CD14-positive monocyte (primary cell): ENCODE measurements at regions of chr1 and their contacts with region 1.

Region 1: GRCh38 chr1:198749279-198749678 is 110.4 kb downstream of the PTPRC start:
- DNase-seq: no peak
- H3K4me3 ChIP-seq: no peak overlapping the region
- H3K4me3 Mint-ChIP-seq: no peak overlapping the region
- H3K27ac ChIP-seq: no peak overlapping the region
- H3K27ac Mint-ChIP-seq: no peak overlapping the region
- H3K4me1 ChIP-seq: peaks cover 0 to under 1% of the 10 kb centered on the region in 2 donors
- H3K4me1 Mint-ChIP-seq: peaks cover 5% of the 10 kb centered on the region
- H3K27me3 ChIP-seq: no peaks in the 10 kb centered on the region
- H3K27me3 Mint-ChIP-seq: no peaks in the 10 kb centered on the region
- CTCF ChIP-seq: no peak

Region 2: DNA sequence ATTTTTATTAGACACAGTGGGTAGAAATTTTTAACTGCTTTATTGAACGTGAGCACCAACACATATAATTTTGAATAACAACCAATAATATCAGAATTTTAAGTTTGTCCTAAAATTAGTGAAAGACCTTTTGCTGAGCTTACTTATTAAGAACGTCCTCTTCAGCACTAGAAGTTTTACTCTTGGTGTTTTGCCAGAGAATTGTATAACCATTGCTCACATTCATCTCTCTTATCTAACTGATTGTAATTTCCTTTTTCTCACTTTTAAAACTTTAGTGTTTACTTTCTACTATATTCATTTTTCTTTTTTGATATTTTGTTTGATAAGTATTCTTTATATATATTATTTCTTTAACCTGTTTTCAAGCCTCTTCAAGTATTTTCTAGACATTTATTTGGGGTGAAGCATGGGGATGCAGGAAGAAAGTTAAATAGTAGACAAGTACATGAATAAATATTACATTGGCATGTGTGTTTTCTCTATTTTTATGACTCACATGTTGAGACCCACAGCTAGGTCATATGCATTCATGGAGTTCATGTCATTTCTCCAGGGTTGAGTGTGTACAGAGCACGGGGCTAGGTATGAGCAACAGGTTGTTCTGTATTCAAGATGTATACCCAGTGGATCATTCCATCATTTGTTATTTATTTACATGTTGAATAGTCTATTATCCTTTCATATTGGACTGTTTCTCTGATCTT is 299.4 kb before region 1 on chr1:
- intact Hi-C with region 1: no loop called
- DNase-seq: no peak
- H3K4me3 ChIP-seq: no peak overlapping the region
- H3K4me3 Mint-ChIP-seq: no peak overlapping the region
- H3K27ac ChIP-seq: no peak overlapping the region
- H3K27ac Mint-ChIP-seq: no peak overlapping the region
- H3K4me1 ChIP-seq: no peaks in the 10 kb centered on the region
- H3K4me1 Mint-ChIP-seq: no peaks in the 10 kb centered on the region
- H3K27me3 ChIP-seq: no peaks in the 10 kb centered on the region
- H3K27me3 Mint-ChIP-seq: peaks cover 1 to 2% (median 1%) of the 10 kb centered on the region in 3 donors
- CTCF ChIP-seq: no peak

Region 3: DNA sequence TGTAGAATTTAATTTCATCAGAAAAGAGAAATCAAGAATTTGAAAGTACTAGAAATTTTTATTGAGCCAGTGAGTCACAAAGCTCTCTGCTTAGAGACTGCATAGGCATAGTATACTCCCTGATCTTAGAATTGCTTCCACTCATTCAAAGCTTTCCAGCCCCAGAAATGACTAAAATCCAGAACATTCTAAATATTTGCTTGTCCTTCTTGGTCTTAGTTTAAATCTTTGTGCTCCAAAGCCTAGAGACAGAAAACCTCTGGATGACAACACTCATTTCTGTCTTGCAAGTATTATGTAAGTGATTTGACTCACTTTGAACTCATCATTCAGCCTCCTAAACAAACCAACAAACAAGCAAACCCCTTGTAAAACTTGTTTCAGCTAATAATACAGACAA is 36.2 kb before region 1 on chr1:
- intact Hi-C with region 1: loop called (anchors 5 to 10 kb)
- DNase-seq: no peak
- H3K4me3 ChIP-seq: no peak overlapping the region
- H3K4me3 Mint-ChIP-seq: no peak overlapping the region
- H3K27ac ChIP-seq: peak overlapping the region in 1 of 2 donors; percentile 55
- H3K27ac Mint-ChIP-seq: peak overlapping the region in 4 of 7 donors; percentile 4 to 67 (median 24)
- H3K4me1 ChIP-seq: peaks cover 7 to 8% of the 10 kb centered on the region in 2 donors
- H3K4me1 Mint-ChIP-seq: peaks cover 13% of the 10 kb centered on the region
- H3K27me3 ChIP-seq: no peaks in the 10 kb centered on the region
- H3K27me3 Mint-ChIP-seq: no peaks in the 10 kb centered on the region
- CTCF ChIP-seq: no peak